Transverse colon (tissue), 4 donors: ENCODE measurements at regions of chr5 and their contacts with region 1.

Region 1: DNA sequence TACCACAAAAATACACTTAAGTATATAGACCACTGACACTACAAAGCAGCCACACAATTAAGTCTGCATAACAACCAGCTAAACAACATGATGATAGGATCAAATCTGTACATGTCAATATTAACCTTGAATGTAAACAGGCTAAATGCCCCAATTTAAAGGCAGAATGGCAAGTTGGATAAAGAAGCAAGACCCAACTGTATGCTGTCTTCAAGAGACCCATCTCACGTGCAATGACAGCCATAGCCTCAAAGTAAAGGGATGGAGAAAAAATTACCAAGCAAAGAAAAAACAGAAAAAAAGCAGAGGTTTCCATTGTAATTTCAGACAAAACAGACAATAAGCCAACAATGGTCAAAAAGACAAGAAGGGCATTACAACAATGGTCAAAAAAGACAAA is 77.3 kb upstream of the APC start:
- DNase-seq: no peak
- H3K4me3 ChIP-seq: no peak overlapping the region
- H3K27ac ChIP-seq: no peak overlapping the region
- H3K4me1 ChIP-seq: no peaks in the 10 kb centered on the region
- H3K27me3 ChIP-seq: no peaks in the 10 kb centered on the region
- CTCF ChIP-seq: no peak
- EP300 ChIP-seq: no peak
- POLR2A ChIP-seq: no peak

Region 2: GRCh38 chr5:112634166-112634565 is 26.2 kb before region 1 on chr5:
- in situ Hi-C with region 1: no loop called
- intact Hi-C with region 1: loop called (anchors 1 kb)
- DNase-seq: no peak
- H3K4me3 ChIP-seq: no peak overlapping the region
- H3K27ac ChIP-seq: no peak overlapping the region
- H3K4me1 ChIP-seq: no peaks in the 10 kb centered on the region
- H3K27me3 ChIP-seq: no peaks in the 10 kb centered on the region
- CTCF ChIP-seq: no peak
- EP300 ChIP-seq: no peak
- POLR2A ChIP-seq: no peak